Posterior vena cava (tissue), 2 donors: ENCODE measurements at regions of chr12 and their contacts with region 1.

Region 1: DNA sequence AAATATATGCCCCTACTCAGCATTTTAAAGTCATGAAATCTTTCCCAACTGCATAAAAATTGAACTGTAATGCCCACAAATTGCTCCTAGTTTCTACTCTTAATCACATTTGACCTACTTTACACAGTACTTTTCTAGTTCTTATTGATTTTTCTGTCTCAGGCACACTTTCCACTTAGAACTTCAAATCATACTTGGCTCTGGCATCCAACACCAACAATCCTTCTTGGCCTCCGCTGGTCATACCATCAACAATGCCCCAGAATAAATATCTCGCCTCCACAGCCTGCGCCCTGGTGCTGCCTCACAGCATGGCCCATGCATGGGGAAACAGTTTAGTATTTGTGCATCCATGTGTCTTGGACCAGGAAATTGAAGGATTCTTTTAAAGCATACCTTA is 107.5 kb upstream of the SYT10 start:
- DNase-seq: no peak

Region 2: DNA sequence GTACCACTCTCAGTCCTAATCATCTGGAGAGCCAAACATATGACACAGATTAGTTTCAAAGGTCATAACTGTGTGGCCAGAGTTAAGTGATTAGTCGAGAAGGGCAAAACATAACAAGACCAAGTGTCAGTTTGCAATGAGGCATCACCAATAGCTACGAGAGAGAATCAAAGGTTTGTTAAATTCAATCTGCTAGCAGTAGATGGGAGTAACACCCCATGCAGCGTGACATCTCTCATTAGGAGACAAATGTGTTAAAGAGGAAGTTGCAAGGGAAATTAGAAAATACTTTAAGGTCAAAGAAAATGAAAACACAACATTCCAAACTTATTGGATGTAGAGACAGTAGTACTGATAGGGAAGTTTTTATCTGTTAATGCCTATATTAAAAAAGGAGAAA is 28.3 kb after region 1 on chr12:
- intact Hi-C with region 1: loop called in 1 of 2 experiments (anchors 1 kb)
- DNase-seq: no peak

Region 3: DNA sequence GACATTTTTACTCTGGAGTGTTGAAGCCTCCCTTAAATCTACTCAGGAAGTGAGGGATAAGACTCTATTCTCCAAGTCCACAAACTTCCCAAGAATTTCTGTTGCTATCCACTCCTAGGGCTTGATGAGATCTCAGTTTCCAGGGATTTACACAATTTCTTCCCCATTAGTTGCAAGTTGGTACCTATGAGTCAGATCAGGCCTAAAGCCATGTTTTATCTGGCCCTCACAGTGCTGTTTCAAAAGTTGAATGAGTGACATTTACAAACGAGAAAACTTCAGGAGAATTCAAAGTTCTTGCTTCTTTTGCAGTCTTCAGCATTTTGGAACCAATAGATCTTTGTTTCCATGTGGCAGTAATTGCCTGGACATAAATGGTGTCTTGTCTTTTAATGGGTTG is 49.0 kb after region 1 on chr12:
- intact Hi-C with region 1: no loop called
- DNase-seq: no peak

Region 4: GRCh38 chr12:33628093-33628492 is 81.0 kb after region 1 on chr12:
- intact Hi-C with region 1: no loop called
- DNase-seq: no peak

Region 5: GRCh38 chr12:33752854-33753253 is 205.8 kb after region 1 on chr12:
- intact Hi-C with region 1: no loop called
- DNase-seq: no peak